Endothelial cell of umbilical vein (primary cell): ENCODE measurements at regions of chr6 and their contacts with region 1.

Region 1: DNA sequence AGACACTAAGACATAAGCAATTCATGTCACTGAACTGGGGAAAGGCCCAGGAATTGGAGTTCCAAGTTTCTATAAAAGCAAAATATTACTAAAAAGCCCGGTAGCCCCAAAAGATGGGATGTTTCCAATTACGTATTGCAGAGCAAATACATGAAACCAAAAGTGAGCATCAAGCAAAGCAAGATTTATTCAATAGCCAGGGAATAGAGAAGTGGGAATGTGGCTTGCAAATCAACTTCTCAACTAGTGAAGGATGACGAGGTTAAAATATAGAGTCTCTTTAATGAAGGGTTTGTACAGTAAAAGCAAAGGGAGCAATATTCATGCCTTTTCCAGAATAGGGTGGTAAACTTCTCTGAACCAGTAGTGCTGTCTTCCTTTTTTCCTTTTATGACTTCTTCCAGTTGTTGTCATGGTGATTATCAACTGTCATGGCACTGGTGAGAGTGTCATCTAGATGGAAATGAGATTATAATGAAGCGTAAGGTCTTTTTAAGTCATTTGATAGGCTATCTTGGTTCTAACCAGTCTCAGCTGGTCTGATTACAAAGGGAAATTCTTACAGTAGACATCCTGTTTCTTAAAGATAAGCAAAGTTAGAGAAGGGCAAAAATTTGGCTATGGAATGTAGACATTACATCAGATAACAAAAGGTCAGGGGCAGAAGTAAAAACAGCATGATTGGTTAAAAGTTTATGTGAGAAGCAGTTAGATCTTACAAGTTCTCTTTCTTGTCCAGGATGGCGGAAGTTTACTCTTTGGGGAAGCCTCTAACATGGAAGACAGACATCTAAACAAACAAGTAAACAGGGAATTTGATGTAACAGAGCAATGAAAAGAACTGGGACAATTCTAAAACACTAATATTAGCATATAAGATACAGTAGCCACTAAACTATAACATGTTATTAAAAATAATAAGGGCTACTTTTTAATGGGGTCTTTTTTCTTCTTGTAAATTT is 96.9 kb downstream of the TBX18 start:
- DNase-seq: peak; percentile 88
- H3K4me3 ChIP-seq: no peak overlapping the region
- H3K27ac ChIP-seq: peak overlapping the region; percentile 89
- H3K4me1 ChIP-seq: peaks cover 17% of the 10 kb centered on the region
- H3K27me3 ChIP-seq: no peaks in the 10 kb centered on the region
- CTCF ChIP-seq: no peak
- POLR2A ChIP-seq: no peak

Region 2: GRCh38 chr6:84618046-84618752 is 49.3 kb before region 1 on chr6:
- CTCF ChIA-PET with region 1: no interaction called
- POLR2A ChIA-PET with region 1: no interaction called
- dilution Hi-C with region 1: no loop called
- intact Hi-C with region 1: loop called (anchors 1 kb)
- DNase-seq: peak; percentile 96
- H3K4me3 ChIP-seq: no peak overlapping the region
- H3K27ac ChIP-seq: peak overlapping the region; percentile 100
- H3K4me1 ChIP-seq: peaks cover 28% of the 10 kb centered on the region
- H3K27me3 ChIP-seq: no peaks in the 10 kb centered on the region
- CTCF ChIP-seq: no peak
- POLR2A ChIP-seq: no peak

Region 3: GRCh38 chr6:84825461-84825860 is 157.9 kb after region 1 on chr6:
- CTCF ChIA-PET with region 1: no interaction called
- POLR2A ChIA-PET with region 1: no interaction called
- dilution Hi-C with region 1: no loop called
- intact Hi-C with region 1: no loop called
- DNase-seq: peak; percentile 85
- H3K4me3 ChIP-seq: no peak overlapping the region
- H3K27ac ChIP-seq: no peak overlapping the region
- H3K4me1 ChIP-seq: peaks cover 6% of the 10 kb centered on the region
- H3K27me3 ChIP-seq: no peaks in the 10 kb centered on the region
- CTCF ChIP-seq: no peak
- POLR2A ChIP-seq: no peak